B cell (primary cell): ENCODE measurements at regions of chr5 and their contacts with region 1.

Region 1: DNA sequence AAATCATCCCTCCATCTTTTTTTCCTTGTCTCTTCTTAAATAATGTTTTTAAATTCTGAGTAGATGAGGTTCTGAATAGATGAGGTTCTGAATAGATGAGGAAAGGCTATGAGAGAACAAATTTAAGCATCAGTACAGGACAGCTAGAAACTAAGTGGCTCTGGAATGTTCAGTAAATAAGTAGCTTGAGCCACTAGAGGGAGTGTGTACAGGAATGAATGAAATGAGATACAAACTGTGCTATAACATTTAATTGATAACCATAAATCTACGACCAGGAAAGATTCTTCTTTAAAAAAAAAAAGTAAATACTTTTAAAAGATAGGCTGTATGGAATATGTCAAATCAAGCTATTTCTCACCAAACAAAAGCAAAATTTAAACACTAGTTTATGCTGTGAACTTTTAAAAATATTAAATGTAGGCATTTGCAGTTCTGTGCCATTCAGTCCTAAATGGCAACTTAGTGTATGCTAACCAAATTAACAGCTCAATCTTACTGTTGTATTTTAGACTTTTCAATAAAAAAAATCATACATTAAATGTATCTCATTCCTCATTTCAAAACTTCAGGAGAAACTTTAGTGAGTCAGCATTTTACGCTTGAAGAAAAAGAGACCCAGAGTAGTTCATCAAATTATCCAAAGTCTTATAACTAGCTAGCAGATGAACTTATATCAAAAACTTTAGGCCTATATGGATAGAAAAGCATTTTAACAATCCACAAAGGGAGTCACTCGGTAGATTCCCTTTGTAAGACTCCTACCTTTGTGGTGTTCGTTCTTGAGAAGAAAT is 70.4 kb upstream of the SNX2 start:
- DNase-seq: peak; percentile 56
- ATAC-seq: no peak
- H3K4me3 ChIP-seq: no peak overlapping the region
- H3K4me3 Mint-ChIP-seq: peak overlapping the region; percentile 2
- H3K27ac ChIP-seq: peak overlapping the region; percentile 96
- H3K27ac Mint-ChIP-seq: peak overlapping the region; percentile 98
- H3K4me1 ChIP-seq: peaks cover 52 to 54% of the 10 kb centered on the region in 2 donors
- H3K4me1 Mint-ChIP-seq: peaks cover 59% of the 10 kb centered on the region
- H3K27me3 ChIP-seq: no peaks in the 10 kb centered on the region
- H3K27me3 Mint-ChIP-seq: no peaks in the 10 kb centered on the region
- CTCF ChIP-seq: peak; percentile 74

Region 2: GRCh38 chr5:122690266-122690665 is 14.2 kb before region 1 on chr5:
- CTCF ChIA-PET with region 1: interaction called, 28 read pairs
- POLR2A ChIA-PET with region 1: interaction called, 3 read pairs
- intact Hi-C with region 1: no loop called
- DNase-seq: no peak
- ATAC-seq: no peak
- H3K4me3 ChIP-seq: no peak overlapping the region
- H3K4me3 Mint-ChIP-seq: no peak overlapping the region
- H3K27ac ChIP-seq: no peak overlapping the region
- H3K27ac Mint-ChIP-seq: no peak overlapping the region
- H3K4me1 ChIP-seq: peaks cover 19 to 21% of the 10 kb centered on the region in 2 donors
- H3K4me1 Mint-ChIP-seq: peaks cover 36% of the 10 kb centered on the region
- H3K27me3 ChIP-seq: no peaks in the 10 kb centered on the region
- H3K27me3 Mint-ChIP-seq: no peaks in the 10 kb centered on the region
- CTCF ChIP-seq: no peak

Region 3: DNA sequence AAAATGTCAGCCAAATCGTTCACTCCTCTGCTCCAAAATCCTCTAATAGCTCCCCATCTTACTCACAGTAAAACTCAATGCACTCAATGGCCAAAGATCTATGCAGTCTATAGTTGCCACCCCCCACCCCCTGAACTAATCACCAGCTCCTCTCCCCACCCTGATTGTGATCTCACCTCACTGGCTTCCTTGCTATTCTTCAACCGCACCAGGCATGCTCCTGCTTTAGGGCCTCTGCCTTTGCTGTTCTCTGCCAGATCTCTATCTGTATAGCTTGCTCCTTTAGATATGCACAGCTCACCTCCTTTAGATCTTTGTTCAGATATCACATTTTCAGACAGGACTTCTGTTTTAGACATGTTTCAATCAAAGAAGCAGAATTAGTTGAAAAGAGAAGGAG is 37.3 kb after region 1 on chr5:
- CTCF ChIA-PET with region 1: interaction called, 10 read pairs
- POLR2A ChIA-PET with region 1: no interaction called
- intact Hi-C with region 1: no loop called
- DNase-seq: no peak
- ATAC-seq: no peak
- H3K4me3 ChIP-seq: no peak overlapping the region
- H3K4me3 Mint-ChIP-seq: no peak overlapping the region
- H3K27ac ChIP-seq: no peak overlapping the region
- H3K27ac Mint-ChIP-seq: no peak overlapping the region
- H3K4me1 ChIP-seq: no peaks in the 10 kb centered on the region
- H3K4me1 Mint-ChIP-seq: peaks cover 4% of the 10 kb centered on the region
- H3K27me3 ChIP-seq: no peaks in the 10 kb centered on the region
- H3K27me3 Mint-ChIP-seq: no peaks in the 10 kb centered on the region
- CTCF ChIP-seq: no peak

Region 4: GRCh38 chr5:122845229-122846050 is 141.0 kb after region 1 on chr5 and contains the start of gene SNX24:
- CTCF ChIA-PET with region 1: interaction called, 7 read pairs
- POLR2A ChIA-PET with region 1: interaction called, 3 read pairs
- intact Hi-C with region 1: loop called (anchors 5 kb)
- DNase-seq: peak; percentile 81
- ATAC-seq: peak; percentile 80
- H3K4me3 ChIP-seq: peak within 1 kb of the TSS; percentile 53 to 94 (median 81)
- H3K4me3 Mint-ChIP-seq: peak within 1 kb of the TSS; percentile 94
- H3K27ac ChIP-seq: peak within 1 kb of the TSS; percentile 26 to 60
- H3K27ac Mint-ChIP-seq: peak within 1 kb of the TSS; percentile 83
- H3K4me1 ChIP-seq: peaks cover 24 to 26% of the 10 kb centered on the region in 2 donors
- H3K4me1 Mint-ChIP-seq: peaks cover 43% of the 10 kb centered on the region
- H3K27me3 ChIP-seq: no peaks in the 10 kb centered on the region
- H3K27me3 Mint-ChIP-seq: no peaks in the 10 kb centered on the region
- CTCF ChIP-seq: no peak
- total RNA-seq, gene SNX24: 7.9 and 9.3 TPM in 2 replicates

Region 5: DNA sequence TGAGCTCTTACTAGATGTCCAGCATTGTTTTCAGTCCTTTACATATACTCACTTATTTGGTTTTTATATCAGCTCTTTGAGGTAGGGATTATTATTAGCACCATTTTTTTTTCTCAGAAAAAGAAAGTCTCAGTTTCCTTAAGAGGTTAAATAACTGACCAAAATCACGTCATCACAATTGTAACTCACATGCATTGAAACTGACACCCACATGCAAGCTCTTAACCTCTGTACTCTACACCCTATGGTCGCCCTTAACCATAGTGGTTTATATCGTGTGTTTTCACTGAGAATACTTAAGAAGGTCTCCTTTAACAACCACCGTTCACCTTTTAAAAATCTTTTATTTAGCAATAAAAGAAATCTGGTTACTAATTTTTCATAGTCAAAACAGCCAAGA is 445.6 kb after region 1 on chr5:
- CTCF ChIA-PET with region 1: no interaction called
- POLR2A ChIA-PET with region 1: no interaction called
- intact Hi-C with region 1: no loop called
- DNase-seq: no peak
- ATAC-seq: no peak
- H3K4me3 ChIP-seq: no peak overlapping the region
- H3K4me3 Mint-ChIP-seq: no peak overlapping the region
- H3K27ac ChIP-seq: no peak overlapping the region
- H3K27ac Mint-ChIP-seq: no peak overlapping the region
- H3K4me1 ChIP-seq: no peaks in the 10 kb centered on the region
- H3K4me1 Mint-ChIP-seq: no peaks in the 10 kb centered on the region
- H3K27me3 ChIP-seq: peaks cover 0 to 7% (median under 1%) of the 10 kb centered on the region in 4 experiments
- H3K27me3 Mint-ChIP-seq: peaks cover 16% of the 10 kb centered on the region
- CTCF ChIP-seq: no peak

Region 6: DNA sequence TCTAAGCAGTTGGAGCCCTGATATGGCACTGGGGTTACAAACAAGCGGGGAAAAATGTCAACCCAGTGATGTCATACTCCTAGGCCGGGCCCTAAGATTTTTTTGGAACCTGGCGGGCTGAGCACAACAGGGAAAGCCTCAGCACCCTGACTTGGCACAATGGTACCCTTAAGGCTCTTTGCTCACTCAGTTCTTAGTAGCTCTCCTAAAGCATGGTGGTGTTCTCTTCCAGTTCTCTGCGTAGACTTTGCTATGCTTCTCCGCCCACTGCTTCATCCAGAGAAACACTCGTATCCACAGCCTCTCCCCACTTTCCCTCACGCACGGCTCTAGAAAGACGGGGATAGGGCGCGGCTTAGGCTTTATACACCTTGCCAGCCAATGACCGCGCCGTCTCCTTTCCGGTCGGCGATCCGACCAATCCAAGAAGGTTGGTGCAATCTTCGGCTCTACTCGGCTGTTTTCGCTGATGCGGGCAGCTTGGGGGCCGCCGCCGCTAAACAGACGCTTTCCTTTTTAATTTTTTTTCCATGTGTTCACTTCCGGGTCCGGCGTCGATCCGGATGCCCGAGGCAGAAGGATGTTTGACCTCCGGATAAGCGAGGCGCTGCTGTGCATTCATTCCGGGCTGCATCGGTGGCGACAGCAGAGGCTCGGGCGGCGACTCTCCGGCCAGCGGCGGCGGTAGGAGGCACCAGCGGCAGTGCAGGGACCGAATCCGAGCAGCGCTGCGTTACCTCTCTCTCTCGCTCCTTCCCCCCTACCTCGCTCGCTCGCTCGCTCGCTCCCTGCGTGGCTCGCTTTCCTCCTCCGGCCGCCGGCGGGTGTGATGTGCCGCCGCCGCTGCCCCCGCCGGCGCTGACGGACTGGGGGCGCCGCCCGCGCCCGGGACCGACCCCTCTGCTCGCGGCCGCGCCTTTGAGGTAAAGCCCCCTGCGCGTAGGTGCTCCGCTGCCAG is 807.5 kb after region 1 on chr5 and contains the start of gene CSNK1G3:
- CTCF ChIA-PET with region 1: no interaction called
- POLR2A ChIA-PET with region 1: interaction called, 3 read pairs
- intact Hi-C with region 1: loop called (anchors 10 kb)
- DNase-seq: peak; percentile 95
- ATAC-seq: peak; percentile 89
- H3K4me3 ChIP-seq: peak within 1 kb of the TSS; percentile 86 to 92 (median 89)
- H3K4me3 Mint-ChIP-seq: peak within 1 kb of the TSS; percentile 100
- H3K27ac ChIP-seq: peak within 1 kb of the TSS; percentile 89 to 90
- H3K27ac Mint-ChIP-seq: peak within 1 kb of the TSS; percentile 99
- H3K4me1 ChIP-seq: peaks cover 33 to 39% of the 10 kb centered on the region in 2 donors
- H3K4me1 Mint-ChIP-seq: peaks cover 41% of the 10 kb centered on the region
- H3K27me3 ChIP-seq: no peaks in the 10 kb centered on the region
- H3K27me3 Mint-ChIP-seq: peaks cover 3% of the 10 kb centered on the region
- CTCF ChIP-seq: no peak
- total RNA-seq, gene CSNK1G3: 140 and 148 TPM in 2 replicates